H1 (cell line): ENCODE measurements at regions of chr2 and their contacts with region 1.

Region 1: GRCh38 chr2:222982010-222982908 is 69.7 kb upstream of the KCNE4 start:
- DNase-seq: no peak
- H3K4me3 ChIP-seq: no peak overlapping the region
- H3K27ac ChIP-seq: no peak overlapping the region
- H3K4me1 ChIP-seq: peaks cover 0 to 3% (median 1%) of the 10 kb centered on the region in 4 experiments; a peak in 3 of 7 replicates
- H3K27me3 ChIP-seq: peaks cover 0 to 1% (median 0%) of the 10 kb centered on the region in 4 experiments; a peak in 1 of 7 replicates
- CTCF ChIP-seq: peak; percentile 53 to 69 (median 54)
- EP300 ChIP-seq: no peak
- POLR2A ChIP-seq: no peak
- RAD21 ChIP-seq: peak; percentile 76 to 77

Region 2: GRCh38 chr2:222959336-222959735 is 22.9 kb before region 1 on chr2:
- CTCF ChIA-PET with region 1: no interaction called
- POLR2A ChIA-PET with region 1: no interaction called
- DNase-seq: peak in 1 of 2 experiments; percentile 71
- H3K4me3 ChIP-seq: no peak overlapping the region
- H3K27ac ChIP-seq: no peak overlapping the region
- H3K4me1 ChIP-seq: no peaks in the 10 kb centered on the region; a peak in 1 of 7 replicates
- H3K27me3 ChIP-seq: no peaks in the 10 kb centered on the region
- CTCF ChIP-seq: peak; percentile 5 to 42 (median 38)
- EP300 ChIP-seq: no peak
- POLR2A ChIP-seq: no peak
- RAD21 ChIP-seq: peak; percentile 42 to 53

Region 3: DNA sequence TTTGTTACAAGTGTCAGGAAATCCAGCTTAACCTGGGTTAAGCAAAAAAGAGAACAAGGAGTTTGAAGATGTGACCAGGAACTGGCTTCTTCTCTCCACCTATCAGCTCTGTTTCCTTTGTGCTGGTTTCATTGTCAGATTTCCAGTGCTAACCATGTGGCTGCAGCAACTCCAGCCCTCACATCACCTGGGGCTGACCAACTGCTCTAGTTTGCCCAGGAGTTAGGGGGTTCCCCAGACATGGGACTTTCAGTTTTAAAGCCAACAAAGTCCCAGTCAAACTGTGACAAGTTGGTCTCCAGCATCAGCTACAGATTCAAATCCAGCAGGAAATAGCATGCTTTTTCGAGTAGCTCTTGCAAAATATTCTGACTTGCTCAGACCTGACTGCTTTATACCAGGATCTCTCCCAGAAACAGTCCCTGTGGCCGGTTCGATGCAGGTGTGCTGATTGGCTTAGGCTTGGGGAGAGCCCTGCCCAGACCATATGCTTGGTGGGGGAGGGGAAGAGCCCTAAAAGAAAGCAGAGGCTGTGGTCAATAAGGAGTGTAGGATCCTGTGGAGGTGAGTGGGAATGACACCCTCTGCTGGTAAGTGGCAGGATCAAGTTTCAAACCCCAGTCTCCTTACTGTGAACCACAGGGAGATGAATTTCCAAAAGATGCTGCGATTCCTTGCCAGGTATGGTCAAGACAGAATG is 119.2 kb after region 1 on chr2:
- CTCF ChIA-PET with region 1: interaction called, 39 read pairs
- POLR2A ChIA-PET with region 1: no interaction called
- DNase-seq: peak; percentile 67 to 72
- H3K4me3 ChIP-seq: no peak overlapping the region; a peak in 1 of 8 replicates
- H3K27ac ChIP-seq: no peak overlapping the region
- H3K4me1 ChIP-seq: peaks cover 2 to 6% (median 2%) of the 10 kb centered on the region in 4 experiments; a peak in 5 of 7 replicates
- H3K27me3 ChIP-seq: no peaks in the 10 kb centered on the region
- CTCF ChIP-seq: peak; percentile 45 to 81 (median 62)
- EP300 ChIP-seq: no peak
- POLR2A ChIP-seq: no peak
- RAD21 ChIP-seq: peak; percentile 76 to 84